Naive thymus-derived CD4-positive, alpha-beta T cell (primary cell): ENCODE measurements at regions of chr6 and their contacts with region 1.

Region 1: DNA sequence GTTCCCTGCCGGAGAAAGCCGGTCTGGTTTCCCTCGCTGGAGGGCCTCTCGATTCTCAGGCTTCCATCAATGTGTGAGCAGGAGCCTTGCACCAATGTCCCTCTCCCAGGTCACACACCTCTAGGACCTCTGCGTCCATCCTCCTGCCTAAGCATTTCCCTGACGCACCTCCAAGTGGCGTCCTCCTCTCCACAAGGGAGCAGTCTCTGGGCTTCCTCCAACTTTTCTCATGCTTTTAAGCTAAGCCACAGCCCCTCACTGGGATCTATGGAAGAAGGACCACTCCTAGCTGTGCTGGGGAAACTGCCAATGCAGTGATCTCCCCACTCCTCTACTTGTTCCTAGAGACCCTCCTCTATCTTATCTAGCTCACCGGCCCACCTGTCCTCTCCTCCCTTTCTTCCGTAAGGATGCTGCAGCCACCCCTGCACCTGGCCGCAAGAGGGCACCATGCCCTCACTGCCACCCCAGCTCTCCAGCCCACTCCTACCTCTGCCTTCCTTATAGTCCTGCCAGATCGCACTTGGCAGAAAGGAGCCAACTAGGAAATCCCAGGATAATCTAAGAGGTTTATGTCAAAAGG is 258.7 kb downstream of the LRFN2 start:
- DNase-seq: peak in 8 of 9 donors; percentile 3 to 73 (median 43)
- ATAC-seq: peak; percentile 70
- H3K4me3 ChIP-seq: no peak overlapping the region
- H3K4me3 Mint-ChIP-seq: peak overlapping the region in 1 of 10 donors; percentile 3
- H3K27ac ChIP-seq: no peak overlapping the region
- H3K27ac Mint-ChIP-seq: peak overlapping the region in 3 of 9 donors; percentile 9 to 36 (median 23)
- H3K4me1 ChIP-seq: peaks cover 0 to 10% of the 10 kb centered on the region in 2 donors
- H3K4me1 Mint-ChIP-seq: peaks cover 0 to 65% (median 6%) of the 10 kb centered on the region in 7 donors
- H3K27me3 ChIP-seq: no peaks in the 10 kb centered on the region
- H3K27me3 Mint-ChIP-seq: peaks cover 4 to 45% (median 13%) of the 10 kb centered on the region in 5 donors

Region 2: DNA sequence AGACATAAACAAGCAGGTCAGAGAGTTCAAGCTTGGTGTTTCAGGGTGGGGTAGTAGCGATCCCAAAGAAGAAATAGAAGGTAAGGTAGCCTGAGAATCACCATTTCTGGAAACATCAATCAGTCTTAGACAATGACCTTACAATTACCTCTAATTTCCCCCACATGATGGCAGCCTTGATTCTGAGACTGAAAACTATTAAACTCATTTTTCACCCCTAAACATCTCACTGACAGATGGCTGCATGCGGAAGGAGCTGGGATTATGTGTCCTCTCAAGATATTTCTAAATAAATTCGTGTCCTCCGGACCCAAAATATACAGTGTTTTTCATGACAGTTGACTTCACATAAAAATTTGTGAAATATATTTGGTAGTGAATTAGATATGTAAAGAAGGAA is 664.3 kb before region 1 on chr6:
- CTCF ChIA-PET with region 1: no interaction called
- POLR2A ChIA-PET with region 1: no interaction called
- intact Hi-C with region 1: no loop called
- DNase-seq: no peak
- ATAC-seq: no peak
- H3K4me3 ChIP-seq: no peak overlapping the region
- H3K4me3 Mint-ChIP-seq: no peak overlapping the region
- H3K27ac ChIP-seq: no peak overlapping the region
- H3K27ac Mint-ChIP-seq: no peak overlapping the region
- H3K4me1 ChIP-seq: no peaks in the 10 kb centered on the region
- H3K4me1 Mint-ChIP-seq: no peaks in the 10 kb centered on the region
- H3K27me3 ChIP-seq: no peaks in the 10 kb centered on the region
- H3K27me3 Mint-ChIP-seq: peaks cover 3 to 38% (median 21%) of the 10 kb centered on the region in 5 donors

Region 3: DNA sequence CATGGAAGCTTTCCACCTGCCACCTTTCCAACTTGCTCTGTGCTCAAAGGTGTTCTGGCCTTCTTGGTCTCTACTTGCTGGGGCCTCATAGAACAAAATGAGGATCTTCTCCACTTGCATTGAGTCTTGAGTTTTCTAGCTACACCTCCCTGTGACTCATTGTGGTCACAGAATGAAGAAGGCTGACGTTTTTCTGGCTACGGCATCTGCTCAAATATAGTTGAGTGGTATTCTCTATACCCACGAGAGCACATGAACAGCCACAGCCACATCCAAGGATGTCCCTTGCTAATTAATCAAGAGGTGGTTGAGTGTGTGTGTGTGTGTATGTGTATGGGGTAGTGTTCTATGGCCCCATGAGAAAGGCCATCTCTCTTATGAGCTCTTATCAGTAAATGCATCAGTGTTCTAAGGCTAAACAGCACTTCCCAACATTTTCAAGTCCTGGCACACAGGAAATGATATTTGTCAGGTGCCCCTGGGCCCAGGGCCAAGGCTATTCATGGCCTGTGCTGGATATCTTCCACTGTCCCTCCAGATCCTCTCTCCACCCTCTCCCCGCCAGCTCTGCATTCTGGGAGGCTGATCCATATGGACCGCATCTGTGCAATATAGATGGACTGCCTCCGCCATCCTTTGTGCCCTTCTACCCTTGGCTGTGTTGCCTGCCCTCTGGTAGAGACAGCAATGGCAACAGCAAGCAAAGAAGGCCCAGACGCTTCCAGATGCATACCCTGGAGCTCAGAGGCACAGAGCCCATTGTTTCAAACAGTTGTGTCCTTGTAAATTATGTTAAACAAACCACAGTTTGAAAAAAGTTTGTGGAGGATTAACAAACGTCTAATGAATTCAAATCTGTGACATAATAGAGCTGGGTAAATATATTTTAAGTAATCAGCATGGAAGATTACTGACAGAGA is 108.4 kb after region 1 on chr6:
- CTCF ChIA-PET with region 1: no interaction called
- POLR2A ChIA-PET with region 1: no interaction called
- intact Hi-C with region 1: loop called in 1 of 2 experiments (anchors 5 kb)
- DNase-seq: peak in 1 of 9 donors; percentile 39
- ATAC-seq: peak; percentile 73
- H3K4me3 ChIP-seq: no peak overlapping the region
- H3K4me3 Mint-ChIP-seq: peak overlapping the region in 1 of 10 donors; percentile 75
- H3K27ac ChIP-seq: no peak overlapping the region
- H3K27ac Mint-ChIP-seq: peak overlapping the region in 1 of 9 donors; percentile 83
- H3K4me1 ChIP-seq: peaks cover 0 to 8% of the 10 kb centered on the region in 2 donors
- H3K4me1 Mint-ChIP-seq: peaks cover 0 to 45% (median 0%) of the 10 kb centered on the region in 7 donors
- H3K27me3 ChIP-seq: no peaks in the 10 kb centered on the region
- H3K27me3 Mint-ChIP-seq: peaks cover 0 to 5% (median 0%) of the 10 kb centered on the region in 5 donors

Region 4: GRCh38 chr6:40587240-40588069 is 259.0 kb after region 1 on chr6 and contains the start of gene LRFN2:
- CTCF ChIA-PET with region 1: interaction called, 4 read pairs
- POLR2A ChIA-PET with region 1: no interaction called
- intact Hi-C with region 1: loop called in 1 of 2 experiments (anchors 1 kb)
- DNase-seq: peak; percentile 28 to 83 (median 64)
- ATAC-seq: peak; percentile 89
- H3K4me3 ChIP-seq: peak within 1 kb of the TSS; percentile 61
- H3K4me3 Mint-ChIP-seq: peak within 1 kb of the TSS; percentile 72 to 90 (median 84)
- H3K27ac ChIP-seq: peak within 1 kb of the TSS; percentile 32
- H3K27ac Mint-ChIP-seq: peak within 1 kb of the TSS in 3 of 9 donors; percentile 28 to 66 (median 50)
- H3K4me1 ChIP-seq: peaks cover 0 to 10% of the 10 kb centered on the region in 2 donors
- H3K4me1 Mint-ChIP-seq: peaks cover 0 to 36% (median 11%) of the 10 kb centered on the region in 7 donors
- H3K27me3 ChIP-seq: no peaks in the 10 kb centered on the region
- H3K27me3 Mint-ChIP-seq: peaks cover 17 to 54% (median 30%) of the 10 kb centered on the region in 5 donors
- total RNA-seq, gene LRFN2: 0.19 to 4.6 (median 0.96) TPM in 3 of 5 experiments, not detected in the others

Region 5: GRCh38 chr6:40654828-40655227 is 326.3 kb after region 1 on chr6:
- CTCF ChIA-PET with region 1: no interaction called
- POLR2A ChIA-PET with region 1: no interaction called
- intact Hi-C with region 1: no loop called
- DNase-seq: no peak
- ATAC-seq: no peak
- H3K4me3 ChIP-seq: no peak overlapping the region
- H3K4me3 Mint-ChIP-seq: no peak overlapping the region
- H3K27ac ChIP-seq: no peak overlapping the region
- H3K27ac Mint-ChIP-seq: no peak overlapping the region
- H3K4me1 ChIP-seq: no peaks in the 10 kb centered on the region
- H3K4me1 Mint-ChIP-seq: no peaks in the 10 kb centered on the region
- H3K27me3 ChIP-seq: no peaks in the 10 kb centered on the region
- H3K27me3 Mint-ChIP-seq: peaks cover 0 to 8% (median 6%) of the 10 kb centered on the region in 5 donors

Region 6: GRCh38 chr6:40822619-40823018 is 494.1 kb after region 1 on chr6:
- CTCF ChIA-PET with region 1: no interaction called
- POLR2A ChIA-PET with region 1: no interaction called
- intact Hi-C with region 1: loop called in 1 of 2 experiments (anchors 5 kb)
- DNase-seq: no peak
- ATAC-seq: no peak
- H3K4me3 ChIP-seq: no peak overlapping the region
- H3K4me3 Mint-ChIP-seq: no peak overlapping the region
- H3K27ac ChIP-seq: no peak overlapping the region
- H3K27ac Mint-ChIP-seq: no peak overlapping the region
- H3K4me1 ChIP-seq: no peaks in the 10 kb centered on the region
- H3K4me1 Mint-ChIP-seq: peaks cover 0 to 2% (median 0%) of the 10 kb centered on the region in 7 donors
- H3K27me3 ChIP-seq: no peaks in the 10 kb centered on the region
- H3K27me3 Mint-ChIP-seq: peaks cover 0 to 31% (median 17%) of the 10 kb centered on the region in 5 donors

Region 7: DNA sequence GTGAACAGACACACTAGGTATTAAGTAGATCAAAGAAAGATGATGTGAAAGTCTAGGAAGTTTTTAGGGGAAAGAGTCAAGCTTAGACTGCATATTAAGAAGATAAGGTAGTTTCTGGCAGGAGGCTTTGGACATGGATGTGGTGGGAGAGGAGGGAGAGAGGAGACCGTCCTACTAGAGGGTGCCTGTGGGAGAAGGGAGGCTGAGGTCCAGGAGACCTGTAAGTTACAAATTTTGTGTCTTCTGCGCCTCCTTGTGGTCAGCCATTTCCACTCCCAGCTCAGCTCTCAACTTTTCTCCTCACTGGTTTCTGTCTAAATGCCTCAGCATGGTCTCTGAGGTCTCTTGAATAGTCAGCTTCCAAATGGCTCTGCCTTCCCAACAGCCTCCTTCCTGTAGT is 517.1 kb after region 1 on chr6:
- CTCF ChIA-PET with region 1: no interaction called
- POLR2A ChIA-PET with region 1: no interaction called
- intact Hi-C with region 1: loop called in 1 of 2 experiments (anchors 1 kb)
- DNase-seq: peak in 4 of 9 donors; percentile 6 to 23 (median 16)
- ATAC-seq: no peak
- H3K4me3 ChIP-seq: no peak overlapping the region
- H3K4me3 Mint-ChIP-seq: no peak overlapping the region
- H3K27ac ChIP-seq: no peak overlapping the region
- H3K27ac Mint-ChIP-seq: no peak overlapping the region
- H3K4me1 ChIP-seq: no peaks in the 10 kb centered on the region
- H3K4me1 Mint-ChIP-seq: peaks cover 0 to 4% (median 0%) of the 10 kb centered on the region in 7 donors
- H3K27me3 ChIP-seq: no peaks in the 10 kb centered on the region
- H3K27me3 Mint-ChIP-seq: peaks cover 11 to 45% (median 28%) of the 10 kb centered on the region in 5 donors